Caco-2 (cell line): ENCODE measurements at regions of chr5 and their contacts with region 1.

Region 1: GRCh38 chr5:151771259-151772028 is at the start of gene G3BP1:
- DNase-seq: peak; percentile 100
- H3K4me3 ChIP-seq: peak within 1 kb of the TSS; percentile 98
- H3K4me3 Mint-ChIP-seq: no peak within 1 kb of the TSS
- H3K27ac Mint-ChIP-seq: no peak within 1 kb of the TSS
- H3K4me1 ChIP-seq: no peaks in the 10 kb centered on the region; the same call in 1 of the 2 replicates
- H3K4me1 Mint-ChIP-seq: peaks cover 17% of the 10 kb centered on the region
- H3K27me3 ChIP-seq: no peaks in the 10 kb centered on the region
- H3K27me3 Mint-ChIP-seq: no peaks in the 10 kb centered on the region
- CTCF ChIP-seq: peak; percentile 4 to 60
- total RNA-seq, gene G3BP1: 291 and 329 TPM in 2 replicates

Region 2: DNA sequence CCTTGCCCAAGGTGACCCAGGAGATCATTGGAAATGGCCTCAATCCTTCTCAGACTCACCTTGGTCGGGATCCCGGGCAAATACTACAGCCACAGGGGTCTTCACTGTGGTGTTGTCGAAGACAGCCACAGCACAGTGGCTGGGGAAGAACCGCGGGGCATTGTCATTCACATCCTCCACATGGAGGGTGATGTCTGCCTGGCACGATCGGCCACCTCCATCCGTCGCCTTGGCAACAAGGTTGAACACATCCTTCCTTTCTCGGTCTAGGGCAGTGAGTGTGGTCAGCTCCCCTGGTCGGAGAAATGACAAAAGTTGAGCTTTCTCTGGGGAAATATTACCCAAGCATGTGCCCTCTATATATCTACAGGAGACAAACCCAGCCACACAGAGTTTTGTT is 237.1 kb before region 1 on chr5:
- CTCF ChIA-PET with region 1: no interaction called
- POLR2A ChIA-PET with region 1: no interaction called
- intact Hi-C with region 1: no loop called
- DNase-seq: no peak
- H3K4me3 ChIP-seq: no peak overlapping the region
- H3K4me3 Mint-ChIP-seq: no peak overlapping the region
- H3K27ac Mint-ChIP-seq: no peak overlapping the region
- H3K4me1 ChIP-seq: no peaks in the 10 kb centered on the region
- H3K4me1 Mint-ChIP-seq: no peaks in the 10 kb centered on the region
- H3K27me3 ChIP-seq: no peaks in the 10 kb centered on the region
- H3K27me3 Mint-ChIP-seq: peaks cover 14% of the 10 kb centered on the region
- CTCF ChIP-seq: no peak

Region 3: GRCh38 chr5:151740336-151740942 is 31.0 kb before region 1 on chr5:
- CTCF ChIA-PET with region 1: interaction called, 10 read pairs
- POLR2A ChIA-PET with region 1: interaction called, 5 read pairs
- intact Hi-C with region 1: loop called (anchors 2 kb)
- DNase-seq: peak; percentile 62 to 70
- H3K4me3 ChIP-seq: no peak overlapping the region
- H3K4me3 Mint-ChIP-seq: no peak overlapping the region
- H3K27ac Mint-ChIP-seq: peak overlapping the region; percentile 51
- H3K4me1 ChIP-seq: peaks cover 15% of the 10 kb centered on the region
- H3K4me1 Mint-ChIP-seq: peaks cover 16% of the 10 kb centered on the region
- H3K27me3 ChIP-seq: no peaks in the 10 kb centered on the region
- H3K27me3 Mint-ChIP-seq: no peaks in the 10 kb centered on the region
- CTCF ChIP-seq: peak; percentile 82 to 94

Region 4: GRCh38 chr5:151758430-151759241 is 12.8 kb before region 1 on chr5 and contains the start of gene ATOX1:
- CTCF ChIA-PET with region 1: interaction called, 25 read pairs
- POLR2A ChIA-PET with region 1: interaction called, 17 read pairs
- intact Hi-C with region 1: loop called (anchors 1 kb)
- DNase-seq: peak; percentile 89 to 96
- H3K4me3 ChIP-seq: peak within 1 kb of the TSS; percentile 74
- H3K4me3 Mint-ChIP-seq: peak within 1 kb of the TSS; percentile 90
- H3K27ac Mint-ChIP-seq: peak within 1 kb of the TSS; percentile 94
- H3K4me1 ChIP-seq: peaks cover 40% of the 10 kb centered on the region
- H3K4me1 Mint-ChIP-seq: peaks cover 16% of the 10 kb centered on the region
- H3K27me3 ChIP-seq: no peaks in the 10 kb centered on the region
- H3K27me3 Mint-ChIP-seq: no peaks in the 10 kb centered on the region
- CTCF ChIP-seq: peak in 1 of 2 experiments; percentile 10
- total RNA-seq, gene ATOX1: 135 and 139 TPM in 2 replicates

Region 5: GRCh38 chr5:151784141-151784540 is 12.7 kb after region 1 on chr5:
- CTCF ChIA-PET with region 1: no interaction called
- POLR2A ChIA-PET with region 1: interaction called, 15 read pairs
- intact Hi-C with region 1: no loop called
- DNase-seq: no peak
- H3K4me3 ChIP-seq: no peak overlapping the region
- H3K4me3 Mint-ChIP-seq: peak overlapping the region; percentile 19
- H3K27ac Mint-ChIP-seq: no peak overlapping the region
- H3K4me1 ChIP-seq: peaks cover 45% of the 10 kb centered on the region
- H3K4me1 Mint-ChIP-seq: peaks cover 25% of the 10 kb centered on the region
- H3K27me3 ChIP-seq: no peaks in the 10 kb centered on the region
- H3K27me3 Mint-ChIP-seq: no peaks in the 10 kb centered on the region
- CTCF ChIP-seq: no peak